ENCODE measurements at regions of chr10 and their contacts with region 1.

Region 1: GRCh38 chr10:119542988-119543813 is 682 bp upstream of the RGS10 start:
- DNase-seq: peak; percentile 82
- ATAC-seq: peak; percentile 24
- H3K4me3 Mint-ChIP-seq: peak overlapping the region; percentile 71
- H3K27ac Mint-ChIP-seq: peak overlapping the region; percentile 93
- H3K4me1 Mint-ChIP-seq: peaks cover 35% of the 10 kb centered on the region
- H3K27me3 Mint-ChIP-seq: peaks cover 1% of the 10 kb centered on the region
- CTCF ChIP-seq: peak; percentile 61

Region 2: GRCh38 chr10:119494236-119495060 is 48.8 kb before region 1 on chr10:
- CTCF ChIA-PET with region 1: interaction called, 7 read pairs
- POLR2A ChIA-PET with region 1: interaction called, 33 read pairs
- intact Hi-C with region 1: no loop called
- DNase-seq: no peak
- ATAC-seq: no peak
- H3K4me3 Mint-ChIP-seq: no peak overlapping the region
- H3K27ac Mint-ChIP-seq: peak overlapping the region; percentile 65
- H3K4me1 Mint-ChIP-seq: peaks cover 79% of the 10 kb centered on the region
- H3K27me3 Mint-ChIP-seq: no peaks in the 10 kb centered on the region
- CTCF ChIP-seq: no peak

Region 3: GRCh38 chr10:119502209-119502608 is 41.0 kb before region 1 on chr10:
- CTCF ChIA-PET with region 1: interaction called, 7 read pairs
- POLR2A ChIA-PET with region 1: interaction called, 33 read pairs
- intact Hi-C with region 1: loop called (anchors 5 kb)
- DNase-seq: peak; percentile 93
- ATAC-seq: peak; percentile 79
- H3K4me3 Mint-ChIP-seq: peak overlapping the region; percentile 60
- H3K27ac Mint-ChIP-seq: peak overlapping the region; percentile 98
- H3K4me1 Mint-ChIP-seq: peaks cover 93% of the 10 kb centered on the region
- H3K27me3 Mint-ChIP-seq: no peaks in the 10 kb centered on the region
- CTCF ChIP-seq: no peak

Region 4: DNA sequence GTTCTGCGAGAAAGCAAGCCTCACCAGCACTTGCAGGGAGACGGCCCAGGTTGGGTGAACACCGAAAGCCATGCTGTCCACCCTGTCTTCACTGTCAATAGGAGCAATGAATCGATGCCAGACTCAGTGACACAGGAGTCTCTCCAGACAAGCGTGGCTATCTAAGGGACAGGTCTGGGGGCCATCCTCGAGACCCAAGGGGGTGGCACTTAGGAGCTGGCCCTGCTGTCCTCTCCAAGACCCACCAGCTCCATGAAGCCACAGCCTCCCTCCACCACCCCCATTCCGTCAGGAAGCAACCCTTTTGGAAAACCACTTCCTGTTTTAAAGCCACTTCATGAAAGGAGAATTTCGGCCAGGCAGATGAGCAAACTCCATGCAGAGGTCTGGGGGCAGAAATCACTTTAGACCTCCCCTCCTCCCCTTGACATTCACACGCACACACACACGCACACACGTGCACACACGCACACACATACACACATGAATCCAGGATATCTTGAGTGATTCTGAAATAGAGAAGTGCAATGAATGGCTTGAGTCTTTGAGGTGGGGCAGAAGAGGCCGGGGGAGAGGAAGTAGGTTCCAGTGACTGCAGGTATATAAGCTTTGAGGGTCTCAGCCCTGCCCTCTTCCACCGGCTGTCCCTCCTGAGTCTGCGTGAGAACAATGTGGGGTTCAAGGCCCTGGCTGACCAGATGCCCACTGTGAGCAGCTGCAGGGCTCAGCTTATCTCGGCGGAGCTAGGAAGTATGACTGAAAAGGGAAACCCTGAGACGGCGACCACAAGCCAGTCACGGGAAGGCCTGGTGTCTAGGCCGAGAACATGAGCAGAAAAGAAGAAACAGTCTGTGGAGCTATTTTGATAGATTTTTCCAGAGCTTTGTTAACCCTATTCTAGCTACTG is 25.7 kb before region 1 on chr10:
- CTCF ChIA-PET with region 1: interaction called, 38 read pairs
- POLR2A ChIA-PET with region 1: interaction called, 58 read pairs
- intact Hi-C with region 1: no loop called
- DNase-seq: peak; percentile 86
- ATAC-seq: peak; percentile 54
- H3K4me3 Mint-ChIP-seq: peak overlapping the region; percentile 53
- H3K27ac Mint-ChIP-seq: peak overlapping the region; percentile 91
- H3K4me1 Mint-ChIP-seq: peaks cover 76% of the 10 kb centered on the region
- H3K27me3 Mint-ChIP-seq: no peaks in the 10 kb centered on the region
- CTCF ChIP-seq: no peak

Region 5: DNA sequence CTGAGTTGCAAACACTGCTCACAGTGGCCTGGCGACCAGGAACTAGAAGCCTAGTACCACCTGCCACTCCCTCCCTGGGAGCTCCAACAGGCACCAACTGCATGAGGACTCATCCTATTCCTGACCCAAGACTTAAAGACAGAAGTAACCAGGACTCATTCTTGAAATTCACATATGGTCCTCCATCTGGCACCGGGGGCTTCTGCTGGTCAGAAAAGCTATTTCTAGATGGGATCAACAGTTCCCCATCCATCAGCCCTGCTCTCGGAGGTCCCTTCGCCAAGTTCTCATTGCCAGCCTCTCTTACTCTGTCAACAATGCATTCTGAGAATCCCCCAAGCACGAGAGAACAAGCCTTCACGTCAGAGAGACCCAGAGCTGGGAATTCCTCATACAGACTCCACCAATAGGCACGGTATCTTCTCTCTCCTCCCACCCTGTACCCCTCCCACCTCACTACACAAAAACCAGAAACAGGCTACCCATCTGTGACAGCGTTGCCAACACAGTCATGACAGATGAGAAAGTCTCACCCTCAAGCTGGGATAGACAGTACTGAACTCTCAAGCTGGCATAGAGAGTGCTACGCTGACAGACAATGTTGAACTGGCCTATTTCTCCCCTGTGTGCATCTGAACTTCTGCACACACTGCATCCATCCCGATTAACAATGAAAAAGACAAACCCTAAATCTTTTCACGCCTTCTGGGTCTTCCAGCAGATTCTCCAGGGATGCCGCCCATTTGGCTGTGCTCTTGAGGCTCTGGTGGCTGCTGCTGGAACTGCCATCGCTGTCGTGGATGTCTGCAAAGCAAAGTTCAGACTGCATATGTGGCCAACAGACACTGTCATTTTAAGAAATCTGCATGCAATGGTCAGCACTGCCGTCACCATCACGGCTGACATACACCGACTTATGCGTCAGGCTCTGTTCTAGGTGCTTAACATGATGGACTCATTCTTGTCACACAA is 16.3 kb before region 1 on chr10:
- CTCF ChIA-PET with region 1: interaction called, 6 read pairs
- POLR2A ChIA-PET with region 1: interaction called, 11 read pairs
- intact Hi-C with region 1: no loop called
- DNase-seq: peak; percentile 39
- ATAC-seq: peak; percentile 72
- H3K4me3 Mint-ChIP-seq: no peak overlapping the region
- H3K27ac Mint-ChIP-seq: peak overlapping the region; percentile 75
- H3K4me1 Mint-ChIP-seq: peaks cover 76% of the 10 kb centered on the region
- H3K27me3 Mint-ChIP-seq: no peaks in the 10 kb centered on the region
- CTCF ChIP-seq: no peak

Region 6: DNA sequence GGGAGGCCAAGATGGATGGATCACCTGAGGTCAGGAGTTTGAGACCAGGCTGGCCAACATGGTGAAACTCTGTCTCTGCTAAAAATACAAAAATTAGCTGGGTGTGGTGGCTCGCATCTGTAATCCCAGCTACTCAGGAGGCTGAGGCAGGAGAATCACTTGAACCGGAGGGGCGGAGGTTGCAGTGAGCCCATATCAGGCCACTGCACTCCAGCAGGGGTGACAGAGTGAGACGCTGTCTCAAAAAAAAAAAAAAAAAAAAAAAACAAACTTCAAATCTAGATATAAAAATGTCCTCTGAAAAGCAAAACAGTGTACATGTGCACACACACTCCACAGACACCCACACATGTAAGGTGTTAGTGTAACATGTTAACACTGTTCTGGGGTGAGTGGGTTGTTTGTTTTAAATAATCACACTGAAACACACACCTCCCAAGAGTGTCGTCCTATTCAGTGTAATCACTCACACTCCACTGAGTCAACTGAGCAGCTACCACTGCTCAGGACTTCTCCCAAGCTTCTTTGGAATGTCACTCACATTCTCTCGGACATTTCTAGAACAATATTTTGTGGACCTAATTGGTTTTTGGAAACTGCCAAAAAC is 12.1 kb after region 1 on chr10:
- CTCF ChIA-PET with region 1: interaction called, 10 read pairs
- POLR2A ChIA-PET with region 1: interaction called, 7 read pairs
- intact Hi-C with region 1: no loop called
- DNase-seq: no peak
- ATAC-seq: no peak
- H3K4me3 Mint-ChIP-seq: no peak overlapping the region
- H3K27ac Mint-ChIP-seq: no peak overlapping the region
- H3K4me1 Mint-ChIP-seq: no peaks in the 10 kb centered on the region
- H3K27me3 Mint-ChIP-seq: peaks cover 5% of the 10 kb centered on the region
- CTCF ChIP-seq: no peak

Region 7: GRCh38 chr10:119596537-119597404 is 53.6 kb after region 1 on chr10 and contains the start of gene TIAL1:
- CTCF ChIA-PET with region 1: interaction called, 5 read pairs
- POLR2A ChIA-PET with region 1: interaction called, 11 read pairs
- intact Hi-C with region 1: loop called (anchors 2 kb)
- DNase-seq: peak; percentile 98
- ATAC-seq: peak; percentile 89
- H3K4me3 Mint-ChIP-seq: peak within 1 kb of the TSS; percentile 99
- H3K27ac Mint-ChIP-seq: peak within 1 kb of the TSS; percentile 98
- H3K4me1 Mint-ChIP-seq: peaks cover 48% of the 10 kb centered on the region
- H3K27me3 Mint-ChIP-seq: no peaks in the 10 kb centered on the region
- CTCF ChIP-seq: no peak
- total RNA-seq, gene TIAL1: 200 to 204 TPM

Region 8: GRCh38 chr10:119769886-119770285 is 226.7 kb after region 1 on chr10:
- CTCF ChIA-PET with region 1: no interaction called
- POLR2A ChIA-PET with region 1: no interaction called
- intact Hi-C with region 1: no loop called
- DNase-seq: no peak
- ATAC-seq: no peak
- H3K4me3 Mint-ChIP-seq: no peak overlapping the region
- H3K27ac Mint-ChIP-seq: no peak overlapping the region
- H3K4me1 Mint-ChIP-seq: peaks cover 9% of the 10 kb centered on the region
- H3K27me3 Mint-ChIP-seq: no peaks in the 10 kb centered on the region
- CTCF ChIP-seq: no peak